H1 (cell line): ENCODE measurements at regions of chr6 and their contacts with region 1.

Region 1: DNA sequence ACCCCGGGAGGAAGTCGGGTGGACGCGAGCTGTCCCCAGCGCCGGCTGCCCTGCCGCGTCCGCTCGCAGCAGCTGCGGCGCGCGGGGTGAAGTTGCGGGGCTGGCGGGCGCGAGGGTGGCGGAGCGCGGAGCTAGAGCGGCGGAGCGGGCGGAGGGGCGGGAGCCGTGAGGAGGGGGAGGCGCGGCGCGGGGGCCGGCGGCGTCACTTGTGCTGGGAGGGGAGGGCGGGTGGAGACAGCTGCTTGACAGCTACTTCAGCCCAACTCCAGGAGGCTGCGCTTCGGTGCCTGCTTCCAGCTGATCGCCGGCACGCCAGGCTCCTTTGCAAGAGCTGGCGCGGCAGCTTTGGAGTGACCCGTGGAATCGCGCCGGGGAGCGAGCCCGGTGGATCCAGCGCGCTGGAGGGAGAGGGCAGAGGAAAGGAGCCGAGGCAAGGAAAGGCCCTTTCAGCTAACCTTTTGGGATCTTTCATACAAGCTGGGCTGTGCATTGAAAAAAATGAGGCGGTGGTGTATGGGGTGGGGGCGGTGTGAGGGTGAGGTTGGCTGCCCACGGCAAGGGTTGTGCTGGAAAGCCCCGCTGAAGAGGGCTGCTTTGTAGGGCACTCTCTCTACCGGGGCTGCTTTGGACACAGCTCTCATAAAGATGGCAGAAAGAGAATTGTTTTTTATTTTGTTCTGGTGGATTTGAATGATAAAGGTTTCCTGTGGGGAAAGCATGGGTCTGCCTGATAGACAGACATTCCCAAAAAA is 24.6 kb downstream of the RIPOR2 start:
- DNase-seq: no peak
- H3K4me3 ChIP-seq: peak overlapping the region; percentile 57 to 79 (median 68)
- H3K27ac ChIP-seq: no peak overlapping the region
- H3K4me1 ChIP-seq: peaks cover 3 to 15% (median 12%) of the 10 kb centered on the region in 4 experiments; a peak in 6 of 7 replicates
- H3K27me3 ChIP-seq: peaks cover 0 to 29% (median 20%) of the 10 kb centered on the region in 4 experiments; a peak in 5 of 7 replicates
- CTCF ChIP-seq: no peak
- EP300 ChIP-seq: no peak
- POLR2A ChIP-seq: no peak
- RAD21 ChIP-seq: no peak

Region 2: GRCh38 chr6:24855395-24856245 is 55.5 kb before region 1 on chr6:
- CTCF ChIA-PET with region 1: interaction called, 29 read pairs
- POLR2A ChIA-PET with region 1: no interaction called
- DNase-seq: peak; percentile 41 to 59
- H3K4me3 ChIP-seq: no peak overlapping the region
- H3K27ac ChIP-seq: no peak overlapping the region
- H3K4me1 ChIP-seq: no peaks in the 10 kb centered on the region
- H3K27me3 ChIP-seq: no peaks in the 10 kb centered on the region
- CTCF ChIP-seq: peak; percentile 81 to 85 (median 83)
- EP300 ChIP-seq: no peak
- POLR2A ChIP-seq: no peak
- RAD21 ChIP-seq: peak; percentile 96 to 97

Region 3: GRCh38 chr6:24883618-24884017 is 27.5 kb before region 1 on chr6:
- CTCF ChIA-PET with region 1: interaction called, 24 read pairs
- POLR2A ChIA-PET with region 1: interaction called, 9 read pairs
- DNase-seq: no peak
- H3K4me3 ChIP-seq: no peak overlapping the region
- H3K27ac ChIP-seq: no peak overlapping the region
- H3K4me1 ChIP-seq: peaks cover 0 to 8% (median 3%) of the 10 kb centered on the region in 4 experiments; a peak in 3 of 7 replicates
- H3K27me3 ChIP-seq: no peaks in the 10 kb centered on the region
- CTCF ChIP-seq: no peak
- EP300 ChIP-seq: no peak
- POLR2A ChIP-seq: no peak
- RAD21 ChIP-seq: no peak

Region 4: GRCh38 chr6:24888715-24889370 is 22.3 kb before region 1 on chr6:
- CTCF ChIA-PET with region 1: interaction called, 15 read pairs
- POLR2A ChIA-PET with region 1: no interaction called
- DNase-seq: no peak
- H3K4me3 ChIP-seq: no peak overlapping the region
- H3K27ac ChIP-seq: no peak overlapping the region
- H3K4me1 ChIP-seq: peaks cover 0 to 3% (median 1%) of the 10 kb centered on the region in 4 experiments; a peak in 2 of 7 replicates
- H3K27me3 ChIP-seq: no peaks in the 10 kb centered on the region
- CTCF ChIP-seq: peak in 1 of 3 experiments; percentile 1; a peak in 1 of 4 replicates
- EP300 ChIP-seq: no peak
- POLR2A ChIP-seq: no peak
- RAD21 ChIP-seq: peak in 1 of 2 experiments; percentile 19; a peak in 2 of 4 replicates

Region 5: DNA sequence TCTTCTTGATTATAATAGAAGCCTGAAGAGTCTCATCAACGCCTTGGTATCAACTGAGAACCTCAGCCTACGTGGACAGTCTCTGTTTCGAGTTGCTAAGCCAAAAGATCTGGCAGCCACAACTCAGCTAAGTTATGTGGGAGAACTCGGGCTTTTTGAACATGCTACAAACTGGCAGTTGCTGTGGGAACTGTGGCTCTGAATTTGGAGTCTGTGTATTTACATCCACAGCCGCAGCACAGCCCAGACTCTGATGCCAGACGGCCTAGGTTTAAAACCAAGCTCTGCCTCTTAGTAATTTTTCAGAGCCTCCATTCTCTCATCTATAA is 11.2 kb before region 1 on chr6:
- CTCF ChIA-PET with region 1: interaction called, 37 read pairs
- POLR2A ChIA-PET with region 1: interaction called, 15 read pairs
- DNase-seq: no peak
- H3K4me3 ChIP-seq: no peak overlapping the region
- H3K27ac ChIP-seq: no peak overlapping the region
- H3K4me1 ChIP-seq: peaks cover 4 to 6% (median 5%) of the 10 kb centered on the region in 4 experiments; a peak in 4 of 7 replicates
- H3K27me3 ChIP-seq: no peaks in the 10 kb centered on the region
- CTCF ChIP-seq: no peak
- EP300 ChIP-seq: no peak
- POLR2A ChIP-seq: no peak
- RAD21 ChIP-seq: no peak

Region 6: GRCh38 chr6:24924580-24925356 is 13.6 kb after region 1 on chr6:
- CTCF ChIA-PET with region 1: interaction called, 42 read pairs
- POLR2A ChIA-PET with region 1: interaction called, 17 read pairs
- DNase-seq: no peak
- H3K4me3 ChIP-seq: no peak overlapping the region
- H3K27ac ChIP-seq: no peak overlapping the region
- H3K4me1 ChIP-seq: peaks cover 3 to 21% (median 17%) of the 10 kb centered on the region in 4 experiments
- H3K27me3 ChIP-seq: no peaks in the 10 kb centered on the region
- CTCF ChIP-seq: no peak
- EP300 ChIP-seq: no peak
- POLR2A ChIP-seq: no peak
- RAD21 ChIP-seq: no peak

Region 7: DNA sequence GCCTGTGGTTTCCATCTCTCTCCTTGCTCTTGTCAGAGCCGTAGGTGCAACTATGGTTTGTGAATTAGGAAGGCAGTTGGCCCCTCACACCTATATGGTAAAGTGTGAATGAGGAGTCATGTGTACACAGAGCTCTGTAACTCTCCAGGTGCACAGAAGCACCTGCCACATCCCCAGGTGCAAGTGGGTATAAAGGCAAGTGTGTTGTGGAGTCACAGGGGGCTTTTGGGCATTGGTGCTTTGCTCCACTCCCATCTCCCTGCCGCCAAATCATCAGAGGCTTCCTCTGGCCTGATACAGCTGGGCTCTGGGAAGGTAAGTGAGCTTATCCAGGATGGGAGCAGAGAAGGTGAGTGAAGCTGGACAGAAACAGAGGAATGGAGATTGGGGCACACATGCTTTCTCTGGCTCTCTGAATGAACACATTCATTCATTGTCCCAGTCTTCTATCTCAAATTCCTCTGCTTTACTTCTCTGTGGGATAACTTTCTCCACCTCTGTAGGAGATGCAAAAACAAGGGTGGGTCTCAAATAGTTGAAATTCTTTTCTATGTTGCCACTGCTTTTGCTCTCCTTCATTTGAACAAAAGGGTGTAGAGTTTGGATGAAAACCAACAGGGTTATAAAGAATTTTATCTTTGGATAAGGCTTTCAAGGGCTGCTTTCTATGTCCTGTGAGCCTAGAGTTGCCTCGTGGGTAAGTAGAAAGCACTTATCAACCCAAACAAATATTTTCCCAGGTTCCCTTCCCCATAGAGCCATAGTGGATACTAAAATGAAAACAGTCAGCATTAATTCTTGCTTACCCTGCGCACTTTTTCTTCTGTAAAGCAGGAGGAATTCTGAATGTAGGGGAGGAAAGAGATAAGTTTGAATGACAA is 69.6 kb after region 1 on chr6:
- CTCF ChIA-PET with region 1: interaction called, 10 read pairs
- POLR2A ChIA-PET with region 1: interaction called, 11 read pairs
- DNase-seq: peak in 1 of 2 experiments; percentile 65
- H3K4me3 ChIP-seq: peak overlapping the region in 3 of 4 experiments; percentile 6 to 46 (median 13); a peak in 4 of 8 replicates
- H3K27ac ChIP-seq: peak overlapping the region; percentile 96
- H3K4me1 ChIP-seq: peaks cover 17 to 42% (median 31%) of the 10 kb centered on the region in 4 experiments; a peak in 6 of 7 replicates
- H3K27me3 ChIP-seq: no peaks in the 10 kb centered on the region
- CTCF ChIP-seq: no peak
- EP300 ChIP-seq: peak in 1 of 2 experiments; percentile 76; a peak in 1 of 3 replicates
- POLR2A ChIP-seq: peak; percentile 45 to 86
- RAD21 ChIP-seq: no peak; a peak in 1 of 4 replicates

Region 8: GRCh38 chr6:25103603-25104002 is 192.5 kb after region 1 on chr6:
- CTCF ChIA-PET with region 1: no interaction called
- POLR2A ChIA-PET with region 1: no interaction called
- DNase-seq: no peak
- H3K4me3 ChIP-seq: no peak overlapping the region
- H3K27ac ChIP-seq: no peak overlapping the region
- H3K4me1 ChIP-seq: no peaks in the 10 kb centered on the region
- H3K27me3 ChIP-seq: no peaks in the 10 kb centered on the region
- CTCF ChIP-seq: no peak
- EP300 ChIP-seq: no peak
- POLR2A ChIP-seq: no peak
- RAD21 ChIP-seq: no peak